Activated naive CD4-positive, alpha-beta T cell treated with anti-CD3 and anti-CD28 coated beads for 36 hours (primary cell): ENCODE measurements at regions of chr19 and their contacts with region 1.

Region 1: GRCh38 chr19:2636897-2637683 is 65.4 kb downstream of the GNG7 start:
- DNase-seq: peak; percentile 83
- H3K4me3 Mint-ChIP-seq: no peak overlapping the region
- H3K27ac Mint-ChIP-seq: no peak overlapping the region
- H3K4me1 Mint-ChIP-seq: peaks cover 13% of the 10 kb centered on the region
- H3K27me3 Mint-ChIP-seq: peaks cover 4% of the 10 kb centered on the region

Region 2: DNA sequence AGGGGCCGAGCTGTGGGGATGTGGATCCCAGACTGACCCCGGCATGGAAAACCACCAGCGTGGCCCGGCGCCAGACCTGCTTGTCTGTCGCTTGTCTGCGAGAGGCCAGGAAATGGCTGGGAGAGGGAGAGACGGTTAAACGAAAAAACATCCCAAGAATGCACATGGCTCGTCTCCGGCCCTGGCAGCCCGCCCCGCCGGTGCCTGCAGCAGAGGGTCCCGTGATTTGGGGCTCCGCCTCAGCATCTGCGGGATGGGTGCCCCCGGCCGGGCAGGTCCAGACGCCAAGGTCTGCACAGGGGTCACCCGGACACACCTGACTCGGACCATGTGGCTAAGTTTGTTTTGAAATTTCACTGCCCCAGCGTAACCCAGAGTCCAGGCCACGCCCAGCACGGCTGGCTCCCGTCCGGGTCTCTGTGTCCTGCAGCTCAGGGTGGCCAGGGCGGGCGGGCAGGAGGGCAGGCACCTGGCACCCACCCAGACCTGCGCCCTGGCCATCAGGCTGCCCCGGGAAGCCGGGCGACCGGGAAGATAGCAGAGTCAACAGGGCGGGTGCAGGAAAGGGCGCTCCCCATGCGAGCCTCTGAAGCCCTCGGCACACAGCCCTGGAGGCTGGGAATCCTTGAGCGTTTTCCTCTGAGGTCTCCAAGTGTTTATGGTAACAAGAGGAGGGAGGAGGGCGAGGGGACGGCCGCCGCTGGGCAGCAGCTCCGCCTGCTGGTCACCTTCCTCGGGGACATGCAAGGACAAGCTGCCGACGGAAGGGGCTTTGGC is 58.0 kb before region 1 on chr19:
- CTCF ChIA-PET with region 1: interaction called, 3 read pairs
- intact Hi-C with region 1: loop called (anchors 5 kb)
- DNase-seq: peak; percentile 80
- H3K4me3 Mint-ChIP-seq: peak overlapping the region; percentile 53
- H3K27ac Mint-ChIP-seq: no peak overlapping the region
- H3K4me1 Mint-ChIP-seq: peaks cover 3% of the 10 kb centered on the region
- H3K27me3 Mint-ChIP-seq: peaks cover 3% of the 10 kb centered on the region

Region 3: GRCh38 chr19:2618611-2619010 is 18.5 kb before region 1 on chr19:
- CTCF ChIA-PET with region 1: interaction called, 92 read pairs
- intact Hi-C with region 1: no loop called
- DNase-seq: peak; percentile 97
- H3K4me3 Mint-ChIP-seq: peak overlapping the region; percentile 53
- H3K27ac Mint-ChIP-seq: peak overlapping the region; percentile 91
- H3K4me1 Mint-ChIP-seq: peaks cover 72% of the 10 kb centered on the region
- H3K27me3 Mint-ChIP-seq: no peaks in the 10 kb centered on the region